PC-3 (cell line): ENCODE measurements at regions of chr20 and their contacts with region 1.

Region 1: GRCh38 chr20:33561692-33562601 is 72.1 kb downstream of the CBFA2T2 start:
- DNase-seq: peak; percentile 97
- ATAC-seq: peak; percentile 95
- H3K4me3 ChIP-seq: peak overlapping the region; percentile 16; the same call in 1 of the 2 replicates
- H3K27ac ChIP-seq: peak overlapping the region; percentile 14; the same call in 1 of the 2 replicates
- H3K4me1 ChIP-seq: peaks cover 18% of the 10 kb centered on the region
- H3K27me3 ChIP-seq: no peaks in the 10 kb centered on the region
- CTCF ChIP-seq: no peak

Region 2: GRCh38 chr20:33351696-33352095 is 210.3 kb before region 1 on chr20:
- CTCF ChIA-PET with region 1: no interaction called
- POLR2A ChIA-PET with region 1: no interaction called
- intact Hi-C with region 1: no loop called
- DNase-seq: no peak
- ATAC-seq: no peak
- H3K4me3 ChIP-seq: no peak overlapping the region
- H3K27ac ChIP-seq: no peak overlapping the region
- H3K4me1 ChIP-seq: no peaks in the 10 kb centered on the region
- H3K27me3 ChIP-seq: no peaks in the 10 kb centered on the region
- CTCF ChIP-seq: no peak

Region 3: DNA sequence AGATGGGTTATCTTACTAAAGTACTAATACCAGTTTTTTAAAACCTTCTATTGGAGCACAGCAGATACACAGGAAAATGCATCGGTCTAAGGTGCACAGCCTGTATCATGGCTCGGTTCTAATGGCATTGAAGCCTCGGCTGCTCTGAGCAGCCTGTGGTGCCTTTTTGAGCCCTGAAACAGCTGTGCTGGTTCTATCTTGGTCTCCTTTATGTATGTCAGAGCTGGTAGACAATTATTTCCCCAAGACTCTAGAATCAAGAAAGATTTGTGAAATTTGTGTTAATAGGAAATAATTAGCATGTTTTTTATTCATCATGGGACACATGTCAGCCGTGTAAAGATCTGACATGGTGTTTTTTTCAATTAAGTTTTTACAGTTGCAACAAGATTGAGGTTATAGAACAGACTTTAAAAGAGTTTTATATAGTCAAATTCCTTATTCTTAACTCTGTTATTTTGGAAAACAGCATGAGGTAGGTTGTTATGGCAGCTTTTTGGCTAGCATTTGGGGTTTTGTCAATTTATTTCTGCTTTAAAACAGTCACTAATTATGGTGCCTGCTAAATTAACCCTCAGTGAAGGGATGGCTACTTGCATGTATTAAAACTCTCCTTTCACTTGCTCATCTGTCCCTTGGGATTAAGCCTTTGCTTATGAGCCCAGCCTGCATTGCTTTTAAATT is 59.9 kb after region 1 on chr20:
- CTCF ChIA-PET with region 1: no interaction called
- POLR2A ChIA-PET with region 1: interaction called, 11 read pairs
- intact Hi-C with region 1: no loop called
- DNase-seq: no peak
- ATAC-seq: no peak
- H3K4me3 ChIP-seq: no peak overlapping the region
- H3K27ac ChIP-seq: no peak overlapping the region
- H3K4me1 ChIP-seq: no peaks in the 10 kb centered on the region
- H3K27me3 ChIP-seq: no peaks in the 10 kb centered on the region
- CTCF ChIP-seq: no peak